ENCODE measurements at regions of chr1 and their contacts with region 1.

Region 1: DNA sequence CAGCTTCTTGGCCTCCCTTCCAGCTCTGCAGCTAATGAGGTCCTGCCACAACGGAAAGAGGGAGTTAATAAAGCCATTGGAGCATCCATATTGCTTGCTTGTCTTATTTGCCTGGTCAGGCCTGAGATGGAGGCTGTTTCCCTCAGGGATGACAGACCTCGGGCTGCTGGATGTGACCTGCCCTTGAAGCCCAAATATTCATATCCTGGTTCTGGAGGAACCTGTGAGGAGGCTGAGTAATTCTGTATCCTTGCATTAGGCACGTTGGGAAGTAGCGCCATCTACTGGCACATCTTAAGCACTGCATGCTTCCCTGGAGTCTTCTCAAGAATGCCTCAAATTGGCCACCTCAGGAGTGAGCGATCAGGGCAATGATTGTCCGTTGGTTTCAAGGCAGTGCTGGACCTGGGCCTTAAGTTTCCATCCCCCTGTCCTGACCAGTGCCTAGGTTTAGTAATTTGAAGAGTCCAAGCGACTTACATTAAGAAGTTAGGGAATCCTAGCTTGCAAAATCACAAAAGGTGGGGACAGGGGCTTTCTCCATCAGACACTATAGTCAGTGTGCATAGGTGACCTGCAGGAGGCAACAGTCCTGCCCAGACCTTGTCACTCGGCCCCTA is 13.8 kb upstream of the NASP start:
- DNase-seq: peak; percentile 46 to 74 (median 65)
- ATAC-seq: peak; percentile 99
- H3K4me3 ChIP-seq: no peak overlapping the region
- H3K4me3 Mint-ChIP-seq: no peak overlapping the region
- H3K27ac ChIP-seq: no peak overlapping the region
- H3K27ac Mint-ChIP-seq: peak overlapping the region in 1 of 9 donors; percentile 63
- H3K4me1 ChIP-seq: no peaks in the 10 kb centered on the region
- H3K4me1 Mint-ChIP-seq: peaks cover 0 to 4% (median 0%) of the 10 kb centered on the region in 7 donors
- H3K27me3 ChIP-seq: no peaks in the 10 kb centered on the region
- H3K27me3 Mint-ChIP-seq: no peaks in the 10 kb centered on the region

Region 2: GRCh38 chr1:45359882-45360513 is 210.1 kb before region 1 on chr1:
- CTCF ChIA-PET with region 1: interaction called, 3 read pairs
- POLR2A ChIA-PET with region 1: no interaction called
- intact Hi-C with region 1: loop called (anchors 1 kb)
- DNase-seq: peak in 7 of 9 donors; percentile 28 to 58 (median 52)
- ATAC-seq: peak; percentile 77
- H3K4me3 ChIP-seq: no peak overlapping the region
- H3K4me3 Mint-ChIP-seq: peak overlapping the region in 3 of 10 donors; percentile 7 to 27 (median 16)
- H3K27ac ChIP-seq: no peak overlapping the region
- H3K27ac Mint-ChIP-seq: peak overlapping the region in 3 of 9 donors; percentile 12 to 45 (median 39)
- H3K4me1 ChIP-seq: no peaks in the 10 kb centered on the region
- H3K4me1 Mint-ChIP-seq: peaks cover 5 to 7% (median 5%) of the 10 kb centered on the region in 7 donors
- H3K27me3 ChIP-seq: no peaks in the 10 kb centered on the region
- H3K27me3 Mint-ChIP-seq: no peaks in the 10 kb centered on the region

Region 3: DNA sequence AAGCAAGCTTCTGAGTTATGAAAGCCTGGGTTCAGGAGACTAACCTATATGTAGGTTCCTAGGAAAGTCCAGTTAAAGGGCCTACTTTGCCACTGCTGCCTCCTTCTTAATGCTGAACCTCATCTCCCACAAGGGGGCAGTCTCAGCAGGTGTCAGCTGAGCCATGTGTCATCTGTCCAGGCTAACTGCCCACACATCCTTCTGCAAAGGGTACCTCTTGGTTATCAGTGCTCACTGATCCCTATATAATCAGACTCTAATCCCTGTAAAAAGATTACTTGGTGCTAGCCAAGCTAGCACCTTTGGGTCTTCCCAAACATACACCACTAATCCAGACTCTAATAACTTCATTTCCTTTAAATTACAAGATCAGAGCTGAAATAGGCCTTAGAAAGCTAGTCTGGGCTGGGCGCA is 57.4 kb before region 1 on chr1:
- CTCF ChIA-PET with region 1: interaction called, 96 read pairs
- POLR2A ChIA-PET with region 1: interaction called, 7 read pairs
- intact Hi-C with region 1: loop called (anchors 1 kb)
- DNase-seq: peak; percentile 23 to 58 (median 43)
- ATAC-seq: peak; percentile 89
- H3K4me3 ChIP-seq: no peak overlapping the region
- H3K4me3 Mint-ChIP-seq: no peak overlapping the region
- H3K27ac ChIP-seq: no peak overlapping the region
- H3K27ac Mint-ChIP-seq: peak overlapping the region in 3 of 9 donors; percentile 18 to 28 (median 21)
- H3K4me1 ChIP-seq: no peaks in the 10 kb centered on the region
- H3K4me1 Mint-ChIP-seq: peaks cover 0 to 26% (median 3%) of the 10 kb centered on the region in 7 donors
- H3K27me3 ChIP-seq: no peaks in the 10 kb centered on the region
- H3K27me3 Mint-ChIP-seq: no peaks in the 10 kb centered on the region

Region 4: GRCh38 chr1:45521398-45522323 is 48.4 kb before region 1 on chr1 and contains the start of gene PRDX1:
- CTCF ChIA-PET with region 1: interaction called, 18 read pairs
- POLR2A ChIA-PET with region 1: interaction called, 18 read pairs
- intact Hi-C with region 1: loop called (anchors 2 kb)
- DNase-seq: peak; percentile 91 to 99 (median 93)
- ATAC-seq: peak; percentile 95
- H3K4me3 ChIP-seq: peak within 1 kb of the TSS; percentile 94
- H3K4me3 Mint-ChIP-seq: peak within 1 kb of the TSS; percentile 90 to 99 (median 94)
- H3K27ac ChIP-seq: peak within 1 kb of the TSS; percentile 87
- H3K27ac Mint-ChIP-seq: peak within 1 kb of the TSS; percentile 83 to 96 (median 91)
- H3K4me1 ChIP-seq: peaks cover 7 to 8% of the 10 kb centered on the region in 2 donors
- H3K4me1 Mint-ChIP-seq: peaks cover 14 to 56% (median 32%) of the 10 kb centered on the region in 7 donors
- H3K27me3 ChIP-seq: no peaks in the 10 kb centered on the region
- H3K27me3 Mint-ChIP-seq: peaks cover 0 to 12% (median 0%) of the 10 kb centered on the region in 5 donors
- total RNA-seq, gene PRDX1: 28.8 to 369 (median 96.3) TPM

Region 5: DNA sequence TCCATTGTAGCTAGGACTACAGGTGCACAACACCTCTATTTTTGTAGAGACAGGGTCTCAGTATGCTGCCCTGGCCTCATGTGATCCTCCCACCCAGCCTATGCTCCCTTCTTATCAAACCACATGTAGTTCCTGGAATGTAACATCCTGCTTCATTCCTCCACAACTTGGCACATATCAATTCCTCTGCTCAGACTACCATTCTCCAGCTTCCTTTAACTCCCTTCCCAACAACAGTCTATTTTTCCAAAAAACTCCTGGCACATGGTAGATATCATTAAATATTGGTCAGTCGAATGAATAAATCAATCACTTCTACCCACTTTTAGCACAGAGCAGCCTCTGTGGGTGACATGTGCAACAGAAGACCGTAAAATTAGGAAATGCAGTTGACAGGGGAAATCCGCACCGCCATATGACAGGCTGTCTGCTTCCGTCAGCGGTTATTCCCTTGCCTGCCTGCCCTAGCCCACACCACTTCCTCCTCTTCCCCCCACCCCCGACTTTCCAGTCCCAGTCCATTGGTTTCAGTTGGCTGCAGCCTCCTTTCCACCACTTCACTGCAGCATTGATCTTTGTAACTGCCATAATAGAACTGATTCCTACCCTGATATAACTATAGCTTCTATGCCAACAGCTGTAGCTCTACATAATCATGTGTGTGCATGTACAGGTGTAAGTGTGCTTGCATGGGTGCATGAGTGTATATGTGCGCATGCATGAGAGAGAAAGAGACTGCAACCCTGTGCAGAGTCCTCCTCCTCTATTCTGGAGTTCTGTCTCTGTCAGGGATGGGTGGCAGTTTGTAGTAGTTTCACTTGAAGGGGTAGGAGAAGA is 26.3 kb before region 1 on chr1:
- CTCF ChIA-PET with region 1: no interaction called
- POLR2A ChIA-PET with region 1: interaction called, 3 read pairs
- intact Hi-C with region 1: loop called in 1 of 2 experiments (anchors 1 kb)
- DNase-seq: peak; percentile 31 to 87 (median 63)
- ATAC-seq: peak; percentile 98
- H3K4me3 ChIP-seq: peak overlapping the region; percentile 15
- H3K4me3 Mint-ChIP-seq: peak overlapping the region; percentile 33 to 82 (median 76)
- H3K27ac ChIP-seq: peak overlapping the region; percentile 55
- H3K27ac Mint-ChIP-seq: peak overlapping the region; percentile 35 to 93 (median 81)
- H3K4me1 ChIP-seq: peaks cover 12 to 13% of the 10 kb centered on the region in 2 donors
- H3K4me1 Mint-ChIP-seq: peaks cover 13 to 41% (median 32%) of the 10 kb centered on the region in 7 donors
- H3K27me3 ChIP-seq: no peaks in the 10 kb centered on the region
- H3K27me3 Mint-ChIP-seq: no peaks in the 10 kb centered on the region

Region 6: DNA sequence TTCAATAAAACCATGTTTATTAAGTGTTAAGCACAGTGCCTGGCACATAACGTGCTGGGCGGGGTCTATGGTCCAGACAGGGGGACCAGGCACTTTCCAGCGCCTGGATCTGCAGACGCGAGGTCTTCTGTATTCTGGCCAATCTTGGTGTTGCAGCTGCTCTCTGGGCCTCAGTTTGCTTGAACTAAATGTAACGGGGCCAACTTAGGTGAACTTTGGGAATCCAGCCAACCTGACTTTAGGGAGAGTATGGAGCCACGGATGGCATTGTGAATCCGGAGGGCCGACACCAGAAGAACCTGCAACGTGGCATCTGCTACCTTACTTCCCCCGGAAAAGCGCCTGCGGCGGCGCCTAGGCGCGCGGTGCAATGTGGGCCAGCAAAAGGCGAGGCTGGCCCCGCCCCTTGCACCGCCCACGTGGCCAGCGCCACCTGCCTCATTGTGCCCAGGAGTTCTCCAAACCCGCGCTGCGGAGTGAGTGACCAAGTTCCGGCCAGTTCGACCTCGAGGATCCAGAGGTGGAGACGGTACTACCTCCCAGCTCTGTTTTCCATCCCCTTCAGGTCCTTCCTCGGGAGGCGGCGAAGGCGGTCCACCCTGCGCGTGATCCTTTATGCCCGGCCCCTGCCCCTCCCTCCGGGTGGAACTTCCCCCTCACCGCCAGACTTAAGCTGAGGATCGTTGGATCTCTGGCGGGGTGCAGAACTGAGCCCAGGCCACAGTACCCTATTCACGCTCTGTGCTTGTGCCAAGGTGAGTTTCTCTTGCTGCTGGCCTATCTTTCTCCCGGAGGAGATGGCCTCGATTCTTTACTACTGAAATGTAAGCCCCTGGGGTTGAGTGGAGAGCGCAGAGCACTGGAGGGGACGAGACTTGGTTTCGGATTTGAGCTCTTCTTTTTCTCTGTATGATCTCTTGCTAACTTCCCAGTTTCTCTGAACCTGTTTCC is 19.4 kb before region 1 on chr1 and contains the start of gene AKR1A1:
- CTCF ChIA-PET with region 1: interaction called, 6 read pairs
- POLR2A ChIA-PET with region 1: interaction called, 3 read pairs
- intact Hi-C with region 1: loop called (anchors 1 kb)
- DNase-seq: peak; percentile 79 to 91 (median 88)
- ATAC-seq: peak; percentile 98
- H3K4me3 ChIP-seq: peak within 1 kb of the TSS; percentile 93
- H3K4me3 Mint-ChIP-seq: peak within 1 kb of the TSS; percentile 89 to 99 (median 96)
- H3K27ac ChIP-seq: peak within 1 kb of the TSS; percentile 89
- H3K27ac Mint-ChIP-seq: peak within 1 kb of the TSS; percentile 83 to 98 (median 96)
- H3K4me1 ChIP-seq: peaks cover 12 to 22% of the 10 kb centered on the region in 2 donors
- H3K4me1 Mint-ChIP-seq: peaks cover 18 to 28% (median 22%) of the 10 kb centered on the region in 7 donors
- H3K27me3 ChIP-seq: no peaks in the 10 kb centered on the region
- H3K27me3 Mint-ChIP-seq: no peaks in the 10 kb centered on the region
- total RNA-seq, gene AKR1A1: 47.5 to 155 (median 69.3) TPM

Measured in naive thymus-derived CD4-positive, alpha-beta T cell (primary cell).